ENCODE measurements at regions of chr1 and their contacts with region 1.

Region 1: DNA sequence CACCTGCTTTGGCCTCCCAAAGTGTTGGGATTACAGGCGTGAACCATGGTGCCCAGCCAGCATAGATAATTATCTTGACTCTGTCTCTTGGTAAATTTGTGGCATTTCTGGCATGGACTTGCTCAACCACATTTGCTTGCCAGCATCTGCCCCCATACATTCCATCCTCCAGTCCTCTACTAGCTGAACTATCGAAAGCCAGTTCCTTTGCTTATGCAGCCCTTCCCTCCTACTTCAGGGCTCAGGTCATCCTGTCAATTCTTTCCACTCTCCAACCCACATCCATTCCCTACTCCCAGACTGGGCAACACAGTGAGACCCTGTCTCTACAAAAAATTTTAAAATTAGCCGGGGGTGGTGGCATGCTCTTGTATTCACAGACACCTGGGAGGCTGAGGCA is 13.0 kb upstream of the UQCRHL start:
- DNase-seq: no peak
- ATAC-seq: no peak
- H3K4me3 Mint-ChIP-seq: no peak overlapping the region
- H3K27ac Mint-ChIP-seq: no peak overlapping the region
- H3K4me1 Mint-ChIP-seq: peaks cover 14% of the 10 kb centered on the region
- H3K27me3 Mint-ChIP-seq: no peaks in the 10 kb centered on the region

Region 2: DNA sequence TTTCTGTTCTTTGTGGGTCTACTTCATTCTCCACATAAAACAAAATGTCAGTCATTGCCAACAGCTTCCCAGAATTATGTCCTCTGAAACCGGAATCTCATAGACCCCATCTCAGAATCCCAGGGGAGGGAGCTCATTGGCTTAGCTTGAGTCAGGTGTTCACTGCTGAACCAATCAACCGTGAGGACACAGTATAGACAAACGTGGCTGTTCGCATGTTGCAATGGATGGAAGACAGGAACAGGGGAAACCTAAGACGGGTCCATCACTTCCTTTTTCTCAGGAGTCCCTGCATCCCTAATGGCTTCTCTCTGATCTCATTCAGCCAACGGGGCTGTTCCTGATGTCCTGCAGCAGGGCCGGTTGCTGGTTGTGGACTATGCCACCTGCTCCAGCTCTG is 354.8 kb before region 1 on chr1:
- CTCF ChIA-PET with region 1: no interaction called
- DNase-seq: no peak
- ATAC-seq: no peak
- H3K4me3 Mint-ChIP-seq: no peak overlapping the region
- H3K27ac Mint-ChIP-seq: no peak overlapping the region
- H3K4me1 Mint-ChIP-seq: no peaks in the 10 kb centered on the region
- H3K27me3 Mint-ChIP-seq: peaks cover 12% of the 10 kb centered on the region

Region 3: GRCh38 chr1:15803354-15803753 is 17.1 kb before region 1 on chr1:
- CTCF ChIA-PET with region 1: interaction called, 10 read pairs
- DNase-seq: no peak
- ATAC-seq: peak; percentile 51
- H3K4me3 Mint-ChIP-seq: no peak overlapping the region
- H3K27ac Mint-ChIP-seq: no peak overlapping the region
- H3K4me1 Mint-ChIP-seq: no peaks in the 10 kb centered on the region
- H3K27me3 Mint-ChIP-seq: peaks cover 11% of the 10 kb centered on the region

Region 4: DNA sequence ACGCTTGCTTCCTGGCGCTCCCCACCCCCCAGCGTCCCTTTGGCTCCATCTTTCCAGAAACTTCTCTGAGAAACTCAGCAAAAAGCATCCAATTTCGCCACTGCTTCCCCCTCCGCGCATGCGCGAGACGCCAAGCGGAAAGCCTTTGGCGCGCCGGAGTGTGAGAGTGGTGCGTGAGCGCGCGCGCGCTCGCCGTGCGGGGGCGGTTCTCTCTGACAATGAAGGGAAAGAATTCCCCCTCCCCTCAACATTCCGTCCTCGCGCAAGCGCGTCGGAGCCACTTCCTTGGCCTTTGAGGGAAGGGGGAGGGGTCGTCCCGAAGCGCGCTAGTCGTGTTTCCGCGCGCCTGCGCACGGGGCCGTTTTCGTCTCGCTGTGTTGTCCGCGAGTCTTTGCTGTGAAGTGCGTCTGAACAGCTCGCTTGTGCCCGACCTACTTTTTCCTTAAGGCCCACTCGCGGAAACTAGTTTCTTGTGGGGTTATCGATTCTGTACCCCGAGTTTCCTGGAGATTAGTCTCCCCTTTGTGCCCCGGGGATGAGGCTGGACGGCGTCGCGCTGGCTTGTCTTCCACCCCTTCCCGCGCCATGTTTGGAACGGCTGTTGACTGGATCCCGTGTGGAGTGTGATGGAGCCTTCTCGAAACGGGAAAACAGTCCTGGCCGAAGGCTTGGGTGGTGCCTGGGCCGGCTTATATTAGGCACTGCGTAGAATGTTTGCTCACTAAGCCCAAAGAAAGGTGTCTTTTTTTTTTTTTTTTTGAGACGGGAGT is 15.4 kb after region 1 on chr1:
- CTCF ChIA-PET with region 1: interaction called, 40 read pairs
- DNase-seq: peak; percentile 99
- ATAC-seq: peak; percentile 64
- H3K4me3 Mint-ChIP-seq: peak overlapping the region; percentile 84
- H3K27ac Mint-ChIP-seq: peak overlapping the region; percentile 95
- H3K4me1 Mint-ChIP-seq: peaks cover 25% of the 10 kb centered on the region
- H3K27me3 Mint-ChIP-seq: no peaks in the 10 kb centered on the region

Region 5: DNA sequence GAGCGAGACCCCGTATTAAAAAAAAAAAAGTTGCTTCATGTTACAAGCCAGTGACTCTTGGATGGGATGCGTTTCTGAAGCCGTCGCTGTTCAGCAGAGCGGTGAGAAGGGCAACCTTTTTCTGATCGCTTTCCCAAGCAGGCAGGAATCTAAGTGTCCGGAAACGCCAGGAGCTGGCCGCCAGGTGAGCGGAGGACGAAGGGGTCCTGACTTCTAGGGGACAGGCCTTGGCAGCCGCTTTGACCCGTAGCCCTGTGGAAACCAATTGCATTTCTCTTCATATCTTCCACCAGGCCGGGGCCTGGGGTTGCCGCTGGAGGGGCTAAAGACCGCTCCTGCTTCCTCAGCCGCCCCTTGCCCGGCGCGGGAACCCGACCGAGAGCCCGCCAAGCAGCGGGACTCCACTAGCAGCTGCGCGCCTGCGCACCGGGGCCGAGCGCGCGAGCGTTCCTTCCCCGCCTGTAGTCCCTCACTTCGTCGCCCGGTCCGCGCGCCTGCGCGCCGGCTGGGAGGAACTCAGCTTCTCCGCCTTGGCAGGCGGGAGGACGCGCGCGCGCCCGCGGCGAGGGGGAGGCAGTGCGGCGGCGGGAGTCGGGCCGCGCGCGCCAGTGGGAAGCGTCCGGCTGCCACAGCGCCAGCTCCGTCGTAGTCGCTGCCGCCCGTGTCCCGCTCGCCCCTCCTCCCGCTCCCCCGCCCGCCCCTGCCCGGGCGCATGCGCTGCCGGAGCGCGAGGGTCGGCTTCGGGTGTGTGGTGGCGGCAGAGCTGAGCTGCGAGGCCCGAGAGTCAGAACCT is 26.8 kb after region 1 on chr1 and contains the start of gene SPEN:
- CTCF ChIA-PET with region 1: interaction called, 20 read pairs
- DNase-seq: peak; percentile 98
- ATAC-seq: peak; percentile 89
- H3K4me3 Mint-ChIP-seq: peak within 1 kb of the TSS; percentile 98
- H3K27ac Mint-ChIP-seq: peak within 1 kb of the TSS; percentile 99
- H3K4me1 Mint-ChIP-seq: peaks cover 42% of the 10 kb centered on the region
- H3K27me3 Mint-ChIP-seq: no peaks in the 10 kb centered on the region
- total RNA-seq, gene SPEN: 74.6 to 75.5 TPM

Region 6: GRCh38 chr1:15949453-15950245 is 129.2 kb after region 1 on chr1:
- CTCF ChIA-PET with region 1: interaction called, 13 read pairs
- DNase-seq: peak; percentile 97
- ATAC-seq: peak; percentile 93
- H3K4me3 Mint-ChIP-seq: peak overlapping the region; percentile 60
- H3K27ac Mint-ChIP-seq: peak overlapping the region; percentile 92
- H3K4me1 Mint-ChIP-seq: peaks cover 74% of the 10 kb centered on the region
- H3K27me3 Mint-ChIP-seq: no peaks in the 10 kb centered on the region

Region 7: DNA sequence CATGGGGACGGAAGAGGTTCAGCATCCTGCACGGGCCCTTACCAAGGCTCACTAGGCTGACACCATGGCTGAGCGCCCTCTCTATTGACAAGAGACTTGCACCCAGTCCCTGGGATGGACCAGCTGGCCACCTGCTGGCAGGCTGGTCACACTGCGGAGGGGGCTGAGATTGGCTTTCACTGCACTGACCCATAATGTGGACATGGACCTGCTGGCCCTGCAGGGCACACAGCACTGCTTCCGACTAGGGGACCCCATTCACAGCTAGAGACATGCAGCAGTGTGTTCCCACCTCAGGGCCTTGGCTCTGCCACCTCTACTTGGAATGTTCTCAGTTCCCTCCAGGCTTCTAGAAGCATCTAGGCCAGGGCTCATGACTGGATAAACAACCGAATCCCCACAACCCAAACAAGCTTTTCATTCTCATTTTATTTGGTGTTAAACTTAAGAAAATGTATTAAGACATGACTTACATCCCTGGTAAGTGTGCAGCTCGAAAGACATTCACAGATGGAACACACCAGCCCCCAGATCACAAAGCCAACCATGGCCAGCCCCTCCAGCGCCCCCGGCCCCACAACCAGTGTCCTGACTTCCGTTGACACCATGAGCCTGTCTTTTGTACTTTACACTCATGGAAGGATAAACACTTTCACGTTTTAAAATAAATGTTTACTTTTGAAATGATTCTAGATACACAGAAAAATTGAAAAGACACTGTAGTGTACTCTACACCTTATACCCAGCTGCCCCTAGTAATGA is 174.3 kb after region 1 on chr1:
- CTCF ChIA-PET with region 1: interaction called, 20 read pairs
- DNase-seq: peak; percentile 70
- ATAC-seq: peak; percentile 77
- H3K4me3 Mint-ChIP-seq: no peak overlapping the region
- H3K27ac Mint-ChIP-seq: no peak overlapping the region
- H3K4me1 Mint-ChIP-seq: no peaks in the 10 kb centered on the region
- H3K27me3 Mint-ChIP-seq: peaks cover 7% of the 10 kb centered on the region

Region 8: DNA sequence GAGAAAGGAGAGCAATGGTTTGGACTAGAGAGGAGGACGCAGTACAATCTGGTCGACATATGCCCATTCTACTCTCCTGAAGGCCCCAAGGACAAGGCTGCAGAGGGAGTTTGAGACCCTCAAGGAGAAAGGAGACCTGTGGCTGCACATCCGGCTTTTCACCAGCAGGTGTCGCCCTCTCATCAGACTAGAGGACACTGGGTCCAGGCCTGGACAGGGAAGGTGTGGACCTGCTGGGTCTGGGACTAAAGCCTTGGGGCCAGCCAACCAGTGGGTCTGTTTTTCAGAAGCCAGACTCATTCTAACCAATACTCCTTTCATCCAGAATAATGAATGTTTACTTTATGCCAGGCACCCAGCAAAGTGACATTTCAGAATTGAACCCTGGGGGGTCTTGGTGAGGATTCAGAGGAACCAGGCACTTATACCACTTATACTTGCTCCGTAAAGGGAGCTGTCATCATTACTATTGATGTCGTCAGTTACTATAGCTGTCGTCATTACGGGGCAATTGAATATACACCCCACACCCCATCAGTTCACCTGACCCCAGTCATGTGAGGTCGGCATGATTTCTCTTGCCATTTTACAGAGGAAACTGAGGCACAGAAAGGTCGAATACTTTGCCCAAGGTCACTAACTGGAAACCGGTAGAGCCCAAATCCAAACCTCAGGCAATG is 188.7 kb after region 1 on chr1:
- CTCF ChIA-PET with region 1: interaction called, 12 read pairs
- DNase-seq: peak; percentile 83
- ATAC-seq: peak; percentile 62
- H3K4me3 Mint-ChIP-seq: no peak overlapping the region
- H3K27ac Mint-ChIP-seq: no peak overlapping the region
- H3K4me1 Mint-ChIP-seq: peaks cover 14% of the 10 kb centered on the region
- H3K27me3 Mint-ChIP-seq: peaks cover 15% of the 10 kb centered on the region

Measured in activated CD8-positive, alpha-beta memory T cell treated with anti-CD3 and anti-CD28 coated beads, Interleukin-2, amount 10 ng/mL, durations not matched to agents 7 days and 5 days (primary cell).